Upper lobe of right lung (tissue), 1 donor: ENCODE measurements at regions of chr11 and their contacts with region 1.

Region 1: DNA sequence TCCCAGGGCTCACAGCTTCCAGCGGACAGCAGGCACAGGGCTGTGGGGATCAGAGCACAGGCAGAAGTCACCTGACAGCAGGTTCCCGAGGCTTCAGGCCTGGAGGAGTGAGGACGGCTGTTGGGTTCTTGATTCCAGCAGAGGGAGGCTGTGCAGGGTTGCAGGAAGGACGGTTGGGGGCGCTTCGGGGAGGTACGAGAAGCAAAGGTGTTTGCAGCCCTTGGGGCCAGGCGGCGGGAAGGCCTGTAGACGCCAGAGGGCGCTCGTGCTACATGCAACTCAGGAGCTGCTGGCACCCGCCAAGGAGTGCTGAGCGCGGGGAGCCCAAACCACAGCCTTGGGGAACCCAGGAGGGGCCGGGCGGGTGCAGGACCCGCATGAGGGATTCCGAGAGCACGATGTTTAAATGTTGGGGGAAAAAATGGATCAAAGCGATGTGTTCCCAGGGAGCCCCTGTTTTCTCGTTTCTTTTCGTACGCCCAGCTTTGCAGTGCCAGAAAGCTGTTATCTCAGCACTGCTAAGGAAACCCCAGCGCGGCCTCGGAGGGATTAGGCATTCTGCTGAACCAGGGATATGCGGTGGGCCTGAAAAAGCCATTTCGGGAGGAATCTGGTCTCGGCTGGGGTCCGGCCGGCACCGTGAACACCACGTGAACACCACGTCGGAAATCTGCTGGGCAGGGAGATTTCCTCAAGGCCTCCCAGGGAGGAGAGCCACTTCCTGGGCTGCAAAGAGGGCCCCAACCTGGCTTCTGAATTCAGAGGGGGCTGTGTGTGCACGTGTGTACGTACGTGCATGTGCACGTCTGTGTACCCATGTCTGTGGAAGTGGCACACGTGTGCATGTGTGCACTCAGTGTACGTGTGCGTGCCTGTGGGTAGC is 88.1 kb downstream of the KCNQ1 start:
- DNase-seq: peak; percentile 95
- ATAC-seq: peak; percentile 87
- H3K4me3 ChIP-seq: peak overlapping the region; percentile 35
- H3K27ac ChIP-seq: no peak overlapping the region
- H3K4me1 ChIP-seq: peaks cover 13% of the 10 kb centered on the region
- H3K27me3 ChIP-seq: no peaks in the 10 kb centered on the region
- CTCF ChIP-seq: peak; percentile 99

Region 2: GRCh38 chr11:2208691-2209369 is 324.1 kb before region 1 on chr11:
- intact Hi-C with region 1: no loop called
- DNase-seq: peak; percentile 63
- ATAC-seq: no peak
- H3K4me3 ChIP-seq: no peak overlapping the region
- H3K27ac ChIP-seq: no peak overlapping the region
- H3K4me1 ChIP-seq: no peaks in the 10 kb centered on the region
- H3K27me3 ChIP-seq: no peaks in the 10 kb centered on the region
- CTCF ChIP-seq: no peak

Region 3: GRCh38 chr11:2428322-2428795 is 104.6 kb before region 1 on chr11:
- intact Hi-C with region 1: loop called (anchors 2 kb)
- DNase-seq: peak; percentile 89
- ATAC-seq: peak; percentile 84
- H3K4me3 ChIP-seq: no peak overlapping the region
- H3K27ac ChIP-seq: no peak overlapping the region
- H3K4me1 ChIP-seq: no peaks in the 10 kb centered on the region
- H3K27me3 ChIP-seq: no peaks in the 10 kb centered on the region
- CTCF ChIP-seq: peak; percentile 87

Region 4: DNA sequence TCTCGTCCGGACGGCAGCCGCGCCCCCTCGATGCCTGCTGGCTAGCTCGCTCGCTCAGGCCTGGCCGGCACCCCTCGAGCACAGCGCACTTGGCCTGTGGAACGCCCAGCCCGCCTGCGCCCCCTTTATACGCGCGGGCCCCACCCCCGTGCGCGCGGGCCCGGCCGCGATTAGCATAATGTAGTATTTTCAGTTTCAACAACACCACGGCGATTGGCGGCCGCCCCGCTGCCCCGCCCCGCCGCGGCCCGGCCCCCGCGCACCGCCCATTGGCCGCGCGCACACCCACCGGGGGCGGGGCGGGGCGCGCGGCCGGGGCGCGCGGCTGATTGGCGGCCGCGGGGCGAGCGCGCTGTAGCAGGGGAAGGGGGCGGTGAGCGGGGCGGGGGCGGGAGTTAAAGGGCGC is 352.7 kb after region 1 on chr11 and contains the start of gene CDKN1C:
- intact Hi-C with region 1: loop called (anchors 1 kb)
- DNase-seq: peak; percentile 92
- ATAC-seq: peak; percentile 84
- H3K4me3 ChIP-seq: peak within 1 kb of the TSS; percentile 79
- H3K27ac ChIP-seq: peak within 1 kb of the TSS; percentile 86
- H3K4me1 ChIP-seq: peaks cover 12% of the 10 kb centered on the region
- H3K27me3 ChIP-seq: no peaks in the 10 kb centered on the region
- CTCF ChIP-seq: no peak
- total RNA-seq, gene CDKN1C: 42.1 TPM